Gastrocnemius medialis (tissue), 4 donors: ENCODE measurements at regions of chr2 and their contacts with region 1.

Region 1: DNA sequence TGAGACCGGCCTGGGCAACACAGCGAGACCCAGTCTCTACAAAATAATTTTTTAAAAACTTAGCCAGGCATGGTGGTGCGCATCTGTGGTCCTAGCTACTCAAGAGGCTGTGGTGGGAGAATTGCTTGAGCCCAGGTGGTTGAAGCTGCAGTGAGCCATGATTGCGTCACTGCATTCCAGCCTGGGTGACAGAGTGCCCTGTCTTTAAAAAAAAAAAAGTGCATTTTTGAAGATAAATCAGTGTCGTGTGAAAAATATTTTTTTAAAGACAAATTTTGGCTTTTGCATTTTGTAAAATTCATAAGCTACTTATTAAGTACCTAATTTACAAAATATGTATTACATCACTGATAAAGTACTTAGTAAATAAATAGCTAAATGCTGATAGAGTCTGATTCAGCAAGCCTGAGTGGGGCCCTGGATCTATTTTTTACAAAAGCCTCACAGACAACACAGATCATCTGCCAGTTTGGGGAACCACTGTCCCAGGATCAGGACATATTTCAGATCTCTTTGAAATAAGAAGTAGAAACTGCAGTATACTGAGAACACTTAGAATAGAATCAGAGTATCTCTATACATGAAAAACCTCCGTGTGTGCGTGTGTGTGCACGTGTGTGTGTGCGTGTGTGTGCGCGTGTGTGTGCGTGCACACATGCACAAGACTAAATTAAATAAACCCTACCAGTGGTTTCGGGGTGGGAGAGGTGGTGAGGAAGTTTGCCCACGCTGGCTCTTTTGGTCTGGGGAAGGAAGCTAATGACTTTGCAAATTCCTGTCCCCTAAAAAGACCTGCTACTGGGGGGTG is 61.6 kb downstream of the AAK1 start:
- DNase-seq: no peak
- ATAC-seq: no peak
- H3K4me3 ChIP-seq: no peak overlapping the region
- H3K27ac ChIP-seq: peak overlapping the region; percentile 56 to 72 (median 59)
- H3K4me1 ChIP-seq: peaks cover 69 to 78% of the 10 kb centered on the region in 2 donors
- H3K27me3 ChIP-seq: no peaks in the 10 kb centered on the region
- CTCF ChIP-seq: no peak
- POLR2A ChIP-seq: no peak

Region 2: GRCh38 chr2:69770193-69771146 is 188.5 kb after region 1 on chr2:
- in situ Hi-C with region 1: no loop called
- intact Hi-C with region 1: loop called (anchors 5 kb)
- DNase-seq: peak; percentile 75 to 80
- ATAC-seq: peak; percentile 95 to 98
- H3K4me3 ChIP-seq: peak overlapping the region in 1 of 4 donors; percentile 23
- H3K27ac ChIP-seq: peak overlapping the region; percentile 94 to 99 (median 96)
- H3K4me1 ChIP-seq: peaks cover 76 to 77% of the 10 kb centered on the region in 2 donors
- H3K27me3 ChIP-seq: no peaks in the 10 kb centered on the region
- CTCF ChIP-seq: no peak
- POLR2A ChIP-seq: peak; percentile 25 to 55

Region 3: DNA sequence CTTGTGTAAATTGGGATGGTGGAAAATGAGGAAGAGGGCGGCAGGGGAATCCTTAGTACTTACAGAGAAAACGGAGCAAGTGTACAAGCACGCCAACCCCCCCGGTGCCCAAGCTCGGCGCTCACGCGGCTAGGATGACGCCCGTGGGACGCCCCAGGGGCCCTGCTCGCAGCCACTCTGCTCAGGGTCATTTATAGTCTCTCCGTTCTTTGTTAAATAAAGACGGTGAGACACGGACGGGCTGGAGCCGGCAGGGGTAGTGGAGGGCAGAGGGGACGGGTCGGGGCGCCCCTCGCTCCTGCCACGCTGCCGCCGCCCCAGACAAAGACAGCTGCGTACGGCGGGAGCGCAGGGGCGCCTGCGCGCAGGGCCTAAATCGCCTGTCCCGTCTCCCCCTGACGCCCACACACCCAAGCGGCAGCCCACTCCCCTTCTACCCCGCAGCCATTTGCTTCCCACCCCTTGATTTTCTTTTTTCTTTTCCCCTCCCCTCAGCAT is 543.1 kb after region 1 on chr2:
- in situ Hi-C with region 1: no loop called
- intact Hi-C with region 1: loop called (anchors 10 kb)
- DNase-seq: peak; percentile 43 to 64
- ATAC-seq: peak; percentile 29 to 36
- H3K4me3 ChIP-seq: peak overlapping the region; percentile 64 to 80 (median 74)
- H3K27ac ChIP-seq: peak overlapping the region; percentile 89 to 100 (median 98)
- H3K4me1 ChIP-seq: peaks cover 47 to 51% of the 10 kb centered on the region in 2 donors
- H3K27me3 ChIP-seq: no peaks in the 10 kb centered on the region
- CTCF ChIP-seq: peak in 1 of 5 experiments; percentile 15
- POLR2A ChIP-seq: peak; percentile 40 to 67